ENCODE measurements at regions of chr14 and their contacts with region 1.

Region 1: GRCh38 chr14:52936437-52936836 is 14.4 kb downstream of the FERMT2 start:
- DNase-seq: no peak
- ATAC-seq: peak; percentile 28

Region 2: DNA sequence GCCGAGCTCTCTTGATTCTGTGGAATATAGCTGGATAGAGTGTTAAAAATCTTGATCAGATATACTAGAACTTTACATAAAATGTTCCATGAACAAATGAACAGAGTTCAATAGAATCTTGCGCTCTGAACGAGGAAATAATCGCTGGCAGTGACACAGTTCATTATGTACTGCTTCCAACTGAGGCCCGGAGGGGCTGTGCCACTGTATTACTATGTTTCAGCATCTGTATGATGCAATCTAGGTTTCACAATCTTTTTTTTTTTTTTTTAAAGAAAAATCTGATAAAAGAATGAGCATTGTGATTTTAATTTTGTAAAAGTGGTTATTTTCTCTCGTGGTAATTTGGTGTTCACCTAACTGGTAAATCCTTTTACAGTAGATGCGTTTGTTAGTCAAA is 62.7 kb before region 1 on chr14:
- intact Hi-C with region 1: loop called (anchors 5 kb)
- DNase-seq: no peak
- ATAC-seq: peak; percentile 92

Region 3: DNA sequence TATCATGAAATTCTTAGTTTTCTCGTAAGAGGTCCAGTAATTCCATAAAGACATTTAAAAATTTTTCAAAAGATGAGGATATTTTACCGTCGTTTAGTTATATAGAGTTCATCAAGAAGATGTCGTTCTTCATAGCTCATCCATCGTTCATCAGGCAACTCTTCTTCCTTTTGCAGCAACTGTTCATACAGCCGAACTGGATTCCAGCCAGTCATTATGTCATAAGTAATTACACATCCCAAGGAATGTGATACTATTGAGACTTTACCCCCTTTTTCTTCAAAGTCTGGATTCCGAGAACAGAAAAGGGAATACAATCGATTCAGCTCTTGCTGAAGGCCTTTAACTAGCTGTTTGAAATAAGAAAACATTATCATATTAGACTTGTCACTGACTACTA is 126.4 kb after region 1 on chr14:
- intact Hi-C with region 1: no loop called
- DNase-seq: no peak
- ATAC-seq: no peak

Measured in sciatic nerve (tissue), 2 donors.